ENCODE measurements at regions of chr4 and their contacts with region 1.

Region 1: DNA sequence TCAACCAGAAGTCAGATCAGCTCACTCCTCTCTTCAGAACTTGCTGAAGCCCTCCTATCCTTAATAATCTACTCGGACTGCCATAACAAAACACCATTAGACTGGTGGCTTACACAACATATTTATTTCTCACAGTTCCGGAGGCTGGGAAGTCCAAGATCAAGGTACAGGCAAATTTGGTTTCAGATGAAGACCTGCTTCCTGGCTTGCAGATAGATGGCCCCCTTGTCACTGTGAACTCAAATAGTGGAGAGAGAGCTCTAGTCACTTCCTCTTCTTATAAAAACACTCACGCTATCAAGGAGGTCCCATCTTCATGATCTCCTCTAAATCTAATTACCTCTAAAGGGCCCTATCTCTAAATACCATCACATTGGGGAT is 125.1 kb downstream of the CAMK2D start:
- DNase-seq: peak; percentile 75
- ATAC-seq: peak; percentile 66
- H3K4me3 ChIP-seq: peak overlapping the region in 3 of 5 experiments; percentile 10 to 18 (median 12)
- H3K4me3 Mint-ChIP-seq: peak overlapping the region; percentile 64
- H3K27ac ChIP-seq: peak overlapping the region; percentile 71 to 76
- H3K27ac Mint-ChIP-seq: peak overlapping the region; percentile 86
- H3K4me1 ChIP-seq: peaks cover 56 to 71% of the 10 kb centered on the region in 2 donors
- H3K4me1 Mint-ChIP-seq: peaks cover 70% of the 10 kb centered on the region
- H3K27me3 ChIP-seq: no peaks in the 10 kb centered on the region
- H3K27me3 Mint-ChIP-seq: no peaks in the 10 kb centered on the region
- CTCF ChIP-seq: peak; percentile 52

Region 2: DNA sequence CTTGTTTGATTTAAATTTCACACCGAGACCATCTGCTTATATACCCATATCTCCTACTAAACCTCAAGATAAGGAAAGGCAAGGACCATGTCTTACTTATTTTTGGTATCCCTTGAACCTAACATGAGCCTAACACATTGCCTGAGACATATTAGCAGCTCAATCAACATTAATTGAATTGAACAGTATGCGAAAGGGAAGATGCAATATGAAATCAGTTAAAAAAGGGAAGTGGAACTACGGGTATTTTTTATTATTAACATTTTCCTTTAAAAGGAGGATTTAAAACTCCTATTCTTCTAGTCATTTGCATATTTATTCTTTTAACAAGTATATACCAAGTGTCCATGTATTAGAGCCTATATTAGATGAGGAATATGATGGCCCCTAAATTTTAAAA is 71.9 kb before region 1 on chr4:
- CTCF ChIA-PET with region 1: interaction called, 10 read pairs
- POLR2A ChIA-PET with region 1: interaction called, 5 read pairs
- intact Hi-C with region 1: loop called (anchors 1 kb)
- DNase-seq: no peak
- ATAC-seq: peak; percentile 54
- H3K4me3 ChIP-seq: peak overlapping the region in 3 of 5 experiments; percentile 10 to 54 (median 19)
- H3K4me3 Mint-ChIP-seq: peak overlapping the region; percentile 87
- H3K27ac ChIP-seq: peak overlapping the region; percentile 74 to 79
- H3K27ac Mint-ChIP-seq: peak overlapping the region; percentile 98
- H3K4me1 ChIP-seq: peaks cover 60 to 88% of the 10 kb centered on the region in 2 donors
- H3K4me1 Mint-ChIP-seq: peaks cover 74% of the 10 kb centered on the region
- H3K27me3 ChIP-seq: no peaks in the 10 kb centered on the region
- H3K27me3 Mint-ChIP-seq: no peaks in the 10 kb centered on the region
- CTCF ChIP-seq: no peak

Region 3: DNA sequence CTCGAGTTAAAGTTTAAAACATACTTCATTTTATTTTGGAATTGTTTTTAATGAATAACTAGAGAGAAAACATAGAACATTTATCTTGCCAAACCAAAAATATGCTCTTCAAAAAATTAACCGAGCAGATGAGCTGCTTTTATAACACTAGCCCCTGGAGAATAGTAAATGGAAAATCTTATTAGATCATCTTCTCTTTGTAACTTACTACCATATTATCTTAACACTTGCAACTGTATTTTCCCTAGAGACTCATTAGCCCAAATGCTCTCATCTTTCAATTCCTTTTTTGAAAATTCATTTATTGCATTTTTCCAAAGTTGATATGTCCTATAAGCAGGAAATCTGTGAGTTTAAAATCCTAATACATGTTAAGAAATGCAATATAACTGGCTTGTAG is 18.2 kb before region 1 on chr4:
- CTCF ChIA-PET with region 1: interaction called, 6 read pairs
- POLR2A ChIA-PET with region 1: interaction called, 4 read pairs
- intact Hi-C with region 1: loop called (anchors 2 kb)
- DNase-seq: peak; percentile 25
- ATAC-seq: peak; percentile 81
- H3K4me3 ChIP-seq: peak overlapping the region in 1 of 5 experiments; percentile 18
- H3K4me3 Mint-ChIP-seq: no peak overlapping the region
- H3K27ac ChIP-seq: peak overlapping the region; percentile 43 to 75
- H3K27ac Mint-ChIP-seq: no peak overlapping the region
- H3K4me1 ChIP-seq: peaks cover 45 to 63% of the 10 kb centered on the region in 2 donors
- H3K4me1 Mint-ChIP-seq: peaks cover 51% of the 10 kb centered on the region
- H3K27me3 ChIP-seq: no peaks in the 10 kb centered on the region
- H3K27me3 Mint-ChIP-seq: no peaks in the 10 kb centered on the region
- CTCF ChIP-seq: no peak

Region 4: DNA sequence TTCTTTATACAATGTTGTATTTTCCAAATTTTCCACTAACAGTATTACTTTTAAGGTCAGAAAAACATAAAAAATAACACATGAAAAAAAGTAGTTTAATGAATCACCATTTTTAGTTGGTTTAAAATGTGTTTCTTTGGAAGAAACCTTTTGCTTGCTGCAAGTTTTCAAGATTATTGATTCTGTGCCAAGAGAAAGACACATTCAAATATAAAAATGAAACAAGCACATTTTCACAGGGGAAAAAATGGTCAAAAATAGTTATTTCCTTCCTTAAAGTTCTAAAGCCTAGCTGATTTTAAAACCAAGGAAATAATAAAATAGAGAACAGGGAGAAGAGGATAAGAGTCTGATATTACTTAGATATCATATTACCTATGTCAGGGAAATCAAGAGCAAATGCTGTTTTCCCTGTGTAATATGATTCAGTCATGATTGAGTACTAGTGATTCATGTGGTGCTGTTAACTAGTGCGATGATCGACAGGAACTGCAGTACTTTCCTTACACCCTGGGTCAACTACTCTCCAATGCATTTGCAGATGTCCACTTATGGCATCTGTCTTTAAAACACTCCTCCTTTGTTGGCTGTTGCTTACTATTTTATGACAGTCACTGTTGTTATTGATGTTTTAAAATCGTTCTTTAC is 21.3 kb after region 1 on chr4:
- CTCF ChIA-PET with region 1: interaction called, 4 read pairs
- POLR2A ChIA-PET with region 1: no interaction called
- intact Hi-C with region 1: loop called (anchors 2 kb)
- DNase-seq: no peak
- ATAC-seq: no peak
- H3K4me3 ChIP-seq: no peak overlapping the region
- H3K4me3 Mint-ChIP-seq: no peak overlapping the region
- H3K27ac ChIP-seq: no peak overlapping the region
- H3K27ac Mint-ChIP-seq: no peak overlapping the region
- H3K4me1 ChIP-seq: peaks cover 7 to 22% of the 10 kb centered on the region in 2 donors
- H3K4me1 Mint-ChIP-seq: peaks cover 50% of the 10 kb centered on the region
- H3K27me3 ChIP-seq: no peaks in the 10 kb centered on the region
- H3K27me3 Mint-ChIP-seq: no peaks in the 10 kb centered on the region
- CTCF ChIP-seq: no peak

Region 5: DNA sequence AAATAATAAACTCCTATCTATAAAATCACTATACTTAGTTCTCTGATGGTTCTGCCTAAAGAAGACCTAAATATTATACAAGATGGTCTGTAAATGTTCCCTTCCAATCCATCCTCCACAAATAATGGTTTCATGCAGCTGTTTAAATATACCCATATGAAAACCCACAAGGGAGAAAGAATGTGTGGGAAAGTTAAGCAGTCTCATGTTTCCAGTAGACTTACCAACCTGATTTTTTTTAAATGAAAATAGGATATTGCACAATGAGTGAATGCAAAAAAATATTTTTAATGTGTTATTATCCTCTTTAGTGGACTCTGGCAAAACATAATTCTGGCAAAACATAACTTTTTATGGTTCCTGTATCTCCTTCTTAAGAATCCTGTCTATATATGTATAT is 101.8 kb after region 1 on chr4:
- CTCF ChIA-PET with region 1: interaction called, 3 read pairs
- POLR2A ChIA-PET with region 1: no interaction called
- intact Hi-C with region 1: loop called (anchors 5 kb)
- DNase-seq: no peak
- ATAC-seq: no peak
- H3K4me3 ChIP-seq: no peak overlapping the region
- H3K4me3 Mint-ChIP-seq: no peak overlapping the region
- H3K27ac ChIP-seq: peak overlapping the region in 1 of 2 donors; percentile 67
- H3K27ac Mint-ChIP-seq: no peak overlapping the region
- H3K4me1 ChIP-seq: peaks cover 4 to 29% of the 10 kb centered on the region in 2 donors
- H3K4me1 Mint-ChIP-seq: peaks cover 54% of the 10 kb centered on the region
- H3K27me3 ChIP-seq: no peaks in the 10 kb centered on the region
- H3K27me3 Mint-ChIP-seq: no peaks in the 10 kb centered on the region
- CTCF ChIP-seq: no peak

Region 6: DNA sequence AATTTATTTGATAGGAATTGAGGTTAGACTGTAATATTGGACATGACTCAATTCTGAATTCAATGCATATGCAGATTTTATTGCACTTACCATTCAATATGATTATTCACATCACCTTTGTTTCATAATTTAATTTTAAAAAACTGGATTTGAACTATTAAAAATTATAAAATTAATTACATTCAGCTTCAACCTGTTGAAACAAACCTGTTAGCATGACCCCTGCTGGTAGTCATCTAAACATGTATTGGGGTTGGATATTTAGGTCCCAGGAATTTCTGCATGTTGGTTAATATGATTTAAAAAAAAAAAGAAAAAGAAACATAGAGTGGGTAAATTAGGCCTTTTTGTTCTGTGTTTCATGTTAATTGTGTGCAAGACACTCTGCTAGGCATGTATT is 257.1 kb after region 1 on chr4:
- CTCF ChIA-PET with region 1: interaction called, 3 read pairs
- POLR2A ChIA-PET with region 1: no interaction called
- intact Hi-C with region 1: loop called (anchors 5 kb)
- DNase-seq: peak; percentile 6
- ATAC-seq: no peak
- H3K4me3 ChIP-seq: no peak overlapping the region
- H3K4me3 Mint-ChIP-seq: no peak overlapping the region
- H3K27ac ChIP-seq: no peak overlapping the region
- H3K27ac Mint-ChIP-seq: no peak overlapping the region
- H3K4me1 ChIP-seq: no peaks in the 10 kb centered on the region
- H3K4me1 Mint-ChIP-seq: no peaks in the 10 kb centered on the region
- H3K27me3 ChIP-seq: no peaks in the 10 kb centered on the region
- H3K27me3 Mint-ChIP-seq: no peaks in the 10 kb centered on the region
- CTCF ChIP-seq: no peak

Region 7: GRCh38 chr4:114384629-114385028 is 748.2 kb after region 1 on chr4:
- CTCF ChIA-PET with region 1: no interaction called
- POLR2A ChIA-PET with region 1: no interaction called
- intact Hi-C with region 1: no loop called
- DNase-seq: peak; percentile 20
- ATAC-seq: no peak
- H3K4me3 ChIP-seq: no peak overlapping the region
- H3K4me3 Mint-ChIP-seq: no peak overlapping the region
- H3K27ac ChIP-seq: no peak overlapping the region
- H3K27ac Mint-ChIP-seq: no peak overlapping the region
- H3K4me1 ChIP-seq: no peaks in the 10 kb centered on the region
- H3K4me1 Mint-ChIP-seq: no peaks in the 10 kb centered on the region
- H3K27me3 ChIP-seq: peaks cover 0 to 3% (median 0%) of the 10 kb centered on the region in 4 experiments
- H3K27me3 Mint-ChIP-seq: peaks cover 18% of the 10 kb centered on the region
- CTCF ChIP-seq: peak; percentile 67

Measured in B cell (primary cell).